ENCODE measurements at regions of chr5 and their contacts with region 1.

Region 1: DNA sequence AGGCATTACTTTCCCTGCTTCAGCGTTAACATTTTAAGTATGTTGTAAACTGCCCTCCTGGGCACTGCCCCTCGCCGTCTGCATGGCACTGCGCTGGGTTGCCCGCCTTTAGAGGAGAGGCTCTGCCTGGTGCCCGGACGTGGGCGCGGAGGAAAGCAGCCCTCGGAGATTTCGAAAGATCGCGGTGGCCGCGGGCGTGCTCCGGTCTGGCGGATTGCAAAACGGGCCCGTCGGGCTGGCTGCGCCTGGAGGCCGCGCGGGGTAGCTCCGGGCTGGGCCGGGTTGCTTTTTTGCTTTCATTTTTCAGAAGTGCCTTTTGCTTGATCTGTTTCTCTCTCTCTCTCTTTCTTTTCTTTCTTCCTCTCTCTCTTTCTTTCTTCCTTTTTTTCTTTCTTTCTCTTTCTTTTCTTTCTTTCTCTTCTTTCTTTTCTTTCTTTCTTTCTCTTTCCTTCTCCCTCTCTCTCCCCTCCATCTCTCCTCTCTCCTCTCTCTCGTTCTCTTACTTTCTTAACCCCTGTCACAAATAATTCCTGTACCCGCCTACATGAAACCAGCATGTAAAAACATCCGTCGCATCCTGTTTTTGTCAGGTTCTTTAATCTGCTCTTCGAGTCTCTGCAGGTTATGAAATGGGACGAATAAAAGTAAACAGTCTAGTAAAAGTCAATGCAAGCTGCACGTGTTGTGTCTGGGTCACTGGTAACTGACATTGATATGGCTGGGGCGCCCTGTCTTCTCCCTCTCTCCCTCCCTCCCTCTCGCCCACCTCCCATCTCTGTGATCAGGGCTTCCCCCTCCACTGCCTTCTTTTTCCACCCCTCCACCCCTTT is 1.7 kb downstream of the FST start:
- DNase-seq: peak; percentile 60
- H3K4me3 Mint-ChIP-seq: peak overlapping the region; percentile 89
- H3K27ac Mint-ChIP-seq: peak overlapping the region; percentile 94
- H3K4me1 Mint-ChIP-seq: peaks cover 49% of the 10 kb centered on the region
- H3K27me3 Mint-ChIP-seq: peaks cover 59% of the 10 kb centered on the region

Region 2: GRCh38 chr5:52948418-52949076 is 533.6 kb before region 1 on chr5:
- intact Hi-C with region 1: loop called (anchors 5 kb)
- DNase-seq: peak; percentile 51
- H3K4me3 Mint-ChIP-seq: no peak overlapping the region
- H3K27ac Mint-ChIP-seq: no peak overlapping the region
- H3K4me1 Mint-ChIP-seq: peaks cover 31% of the 10 kb centered on the region
- H3K27me3 Mint-ChIP-seq: no peaks in the 10 kb centered on the region

Region 3: DNA sequence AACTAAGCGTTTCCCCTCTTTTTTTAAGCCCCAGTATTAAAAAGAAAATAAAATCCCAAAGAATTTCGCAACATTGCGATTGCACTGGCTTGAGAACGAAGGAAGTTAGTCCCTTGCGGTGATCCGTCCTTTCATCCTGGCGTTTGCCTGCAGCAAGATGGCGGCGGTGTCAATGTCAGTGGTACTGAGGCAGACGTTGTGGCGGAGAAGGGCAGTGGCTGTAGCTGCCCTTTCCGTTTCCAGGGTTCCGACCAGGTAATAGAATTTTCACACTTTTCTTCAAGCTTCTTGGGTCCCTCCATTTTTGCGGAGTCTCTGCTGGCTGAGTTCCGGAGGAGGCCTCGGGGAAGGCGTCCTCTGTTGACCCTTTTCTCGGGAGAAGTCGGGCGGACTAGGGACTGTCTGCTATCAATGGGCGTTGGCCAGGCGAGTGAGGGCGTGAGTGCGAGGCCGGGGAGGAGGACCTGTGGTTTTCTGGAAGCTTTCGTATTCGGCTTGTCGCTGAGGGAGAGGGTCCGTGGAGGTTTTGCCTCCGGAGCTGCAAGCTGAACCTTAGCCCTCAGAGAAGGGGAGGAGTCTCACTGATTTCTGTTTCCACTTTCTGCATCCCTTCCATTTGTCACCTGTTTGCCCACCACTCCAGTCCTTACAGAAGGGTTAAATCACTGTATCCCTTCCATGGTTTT is 78.5 kb after region 1 on chr5 and contains the start of gene NDUFS4:
- intact Hi-C with region 1: loop called (anchors 2 kb)
- DNase-seq: peak; percentile 69
- H3K4me3 Mint-ChIP-seq: peak within 1 kb of the TSS; percentile 95
- H3K27ac Mint-ChIP-seq: peak within 1 kb of the TSS; percentile 91
- H3K4me1 Mint-ChIP-seq: peaks cover 17% of the 10 kb centered on the region
- H3K27me3 Mint-ChIP-seq: peaks cover 17% of the 10 kb centered on the region
- total RNA-seq, gene NDUFS4: 45.8 and 50.4 TPM in 2 replicates

Region 4: DNA sequence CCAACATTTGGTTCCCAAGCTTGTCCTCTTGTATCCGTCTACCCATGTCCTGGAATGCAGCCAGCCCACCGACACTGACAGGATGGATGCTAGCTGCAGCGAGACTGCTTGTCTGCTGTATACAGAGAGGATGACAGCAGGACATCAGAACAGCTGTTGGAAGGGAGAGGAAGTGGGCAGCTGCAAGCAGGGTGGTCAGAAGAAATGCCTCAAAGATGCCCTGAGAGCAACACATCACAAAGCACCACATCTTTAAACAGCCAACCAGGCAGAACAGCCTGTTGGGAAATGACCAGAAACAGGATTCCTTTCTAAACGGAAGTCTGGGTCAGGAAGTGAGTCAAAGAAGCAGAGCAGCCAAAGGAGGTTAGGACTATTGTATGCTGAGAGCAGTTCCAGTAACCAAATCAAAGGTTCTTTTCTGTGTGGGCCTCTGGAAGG is 297.5 kb after region 1 on chr5:
- intact Hi-C with region 1: loop called (anchors 5 kb)
- DNase-seq: no peak
- H3K4me3 Mint-ChIP-seq: no peak overlapping the region
- H3K27ac Mint-ChIP-seq: peak overlapping the region; percentile 37
- H3K4me1 Mint-ChIP-seq: peaks cover 28% of the 10 kb centered on the region
- H3K27me3 Mint-ChIP-seq: peaks cover 2% of the 10 kb centered on the region

Region 5: GRCh38 chr5:54217826-54218503 is 735.9 kb after region 1 on chr5:
- intact Hi-C with region 1: loop called (anchors 2 kb)
- DNase-seq: no peak
- H3K4me3 Mint-ChIP-seq: no peak overlapping the region
- H3K27ac Mint-ChIP-seq: no peak overlapping the region
- H3K4me1 Mint-ChIP-seq: no peaks in the 10 kb centered on the region
- H3K27me3 Mint-ChIP-seq: no peaks in the 10 kb centered on the region

Region 6: GRCh38 chr5:54229041-54229780 is 747.1 kb after region 1 on chr5:
- intact Hi-C with region 1: loop called (anchors 1 kb)
- DNase-seq: peak; percentile 47
- H3K4me3 Mint-ChIP-seq: no peak overlapping the region
- H3K27ac Mint-ChIP-seq: no peak overlapping the region
- H3K4me1 Mint-ChIP-seq: no peaks in the 10 kb centered on the region
- H3K27me3 Mint-ChIP-seq: peaks cover 8% of the 10 kb centered on the region

Region 7: GRCh38 chr5:55226027-55226933 is 1744.2 kb after region 1 on chr5:
- intact Hi-C with region 1: loop called (anchors 10 kb)
- DNase-seq: no peak
- H3K4me3 Mint-ChIP-seq: peak overlapping the region; percentile 61
- H3K27ac Mint-ChIP-seq: peak overlapping the region; percentile 65
- H3K4me1 Mint-ChIP-seq: peaks cover 58% of the 10 kb centered on the region
- H3K27me3 Mint-ChIP-seq: peaks cover 87% of the 10 kb centered on the region